Dendritic cell treated with granulocyte-macrophage colony-stimulating factor and Interleukin-4, amounts not matched to agents 40 ng/mL and 50 ng/mL, for 4 days (primary cell): ENCODE measurements at regions of chr2 and their contacts with region 1.

Region 1: DNA sequence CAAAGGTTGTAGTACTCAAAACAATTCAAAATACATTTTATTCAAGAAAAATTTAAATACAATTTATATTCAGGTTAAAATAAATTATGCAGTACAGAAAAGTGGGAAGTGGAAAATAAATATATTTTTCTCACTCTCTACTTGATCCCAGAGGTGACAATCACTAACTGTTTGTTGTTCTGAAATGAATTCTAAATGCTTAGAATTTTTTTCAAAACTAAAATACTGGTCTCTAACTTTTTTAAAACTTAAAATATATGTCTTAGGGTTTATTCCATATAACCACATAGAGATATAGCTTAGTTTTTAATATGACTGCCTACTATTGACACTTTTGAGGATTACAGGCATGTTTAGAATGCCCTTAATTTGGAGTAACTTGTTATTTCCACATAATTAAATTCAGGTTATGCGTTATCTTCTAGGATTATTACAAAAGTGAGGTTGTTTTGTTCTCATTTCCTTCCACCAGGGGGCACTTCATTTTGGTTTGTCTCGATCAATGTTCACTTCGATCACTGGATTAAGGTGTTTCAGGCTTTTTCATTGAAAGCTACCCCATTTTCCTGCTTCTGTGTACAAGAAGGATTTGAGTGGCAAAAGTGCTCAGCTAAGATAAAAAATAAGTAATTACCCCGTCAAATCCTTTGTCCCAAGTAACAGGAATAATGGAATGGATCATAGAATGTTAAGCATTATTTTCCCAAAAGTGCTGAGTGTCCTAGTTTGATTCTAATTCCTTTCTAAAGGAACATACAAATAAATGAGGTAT is 27.1 kb upstream of the TFPI start:
- H3K4me3 Mint-ChIP-seq: no peak overlapping the region
- H3K27ac Mint-ChIP-seq: no peak overlapping the region
- H3K4me1 Mint-ChIP-seq: peaks cover 6% of the 10 kb centered on the region
- H3K27me3 Mint-ChIP-seq: no peaks in the 10 kb centered on the region

Region 2: DNA sequence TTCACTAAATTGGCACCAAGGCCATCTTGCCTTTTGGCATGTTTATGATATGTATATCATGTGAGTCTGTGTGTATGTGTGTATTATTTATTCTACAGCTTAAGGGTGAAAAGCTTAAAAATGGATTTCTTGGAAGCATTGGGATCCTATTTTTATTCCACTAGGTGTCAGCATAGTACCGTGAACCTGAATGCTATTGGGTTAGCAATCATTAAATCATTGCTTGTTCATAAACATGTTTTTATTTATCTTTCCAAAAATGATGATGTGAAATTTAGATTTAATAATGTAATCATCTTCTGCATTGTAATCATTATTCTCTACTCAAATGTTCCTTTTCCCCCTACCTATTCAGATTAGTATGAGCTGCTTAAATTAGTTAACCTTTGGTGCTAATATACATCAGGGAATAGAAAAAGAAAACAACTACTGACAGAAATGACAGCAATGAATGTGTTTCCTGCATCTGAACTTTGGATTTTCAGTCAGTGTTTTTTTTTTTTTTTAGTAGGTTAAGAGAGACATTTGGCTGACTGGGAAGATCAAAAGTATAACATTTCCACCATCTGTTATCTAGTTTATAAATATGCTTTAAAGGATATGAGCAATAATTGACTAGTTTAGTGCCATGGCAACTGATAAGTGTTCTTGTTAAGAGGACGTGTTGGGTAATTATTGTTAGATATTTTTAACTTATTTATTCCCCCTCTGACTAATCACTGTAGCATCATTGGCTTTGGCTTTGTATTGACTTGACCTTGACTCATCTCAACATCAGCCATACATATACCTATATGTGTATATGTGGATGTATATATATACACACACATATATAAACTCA is 718.2 kb before region 1 on chr2:
- intact Hi-C with region 1: loop called (anchors 10 kb)
- H3K4me3 Mint-ChIP-seq: no peak overlapping the region
- H3K27ac Mint-ChIP-seq: no peak overlapping the region
- H3K4me1 Mint-ChIP-seq: no peaks in the 10 kb centered on the region
- H3K27me3 Mint-ChIP-seq: no peaks in the 10 kb centered on the region

Region 3: DNA sequence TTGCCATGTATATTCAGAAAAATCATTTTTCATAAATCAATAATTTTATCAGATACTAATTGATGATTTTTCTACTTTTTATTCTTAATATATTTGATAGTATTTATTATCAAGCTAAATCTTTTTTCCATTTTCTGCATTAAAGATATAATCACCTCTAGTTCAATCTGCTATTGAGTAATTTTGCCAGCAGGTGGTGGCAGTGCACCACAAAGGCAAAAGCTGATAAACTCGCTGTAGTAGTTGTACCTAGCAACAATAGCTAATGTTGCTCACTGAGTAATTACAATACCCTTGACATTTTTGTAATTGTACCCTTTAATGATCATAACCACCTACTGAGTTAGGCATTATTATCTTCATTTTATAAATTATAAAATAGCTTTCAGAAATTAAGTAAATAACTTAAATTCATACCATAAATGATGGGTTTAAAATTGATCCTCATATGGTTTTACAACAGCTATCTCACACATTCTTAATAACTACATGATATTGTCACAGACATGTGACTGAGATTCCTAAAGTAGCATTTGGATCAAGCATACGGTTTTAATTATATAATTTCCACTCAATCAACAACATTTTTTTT is 81.3 kb before region 1 on chr2:
- intact Hi-C with region 1: loop called (anchors 1 kb)
- H3K4me3 Mint-ChIP-seq: no peak overlapping the region
- H3K27ac Mint-ChIP-seq: no peak overlapping the region
- H3K4me1 Mint-ChIP-seq: peaks cover 11% of the 10 kb centered on the region
- H3K27me3 Mint-ChIP-seq: no peaks in the 10 kb centered on the region

Region 4: GRCh38 chr2:187842978-187843847 is 261.9 kb after region 1 on chr2:
- intact Hi-C with region 1: loop called (anchors 5 kb)
- H3K4me3 Mint-ChIP-seq: no peak overlapping the region
- H3K27ac Mint-ChIP-seq: no peak overlapping the region
- H3K4me1 Mint-ChIP-seq: no peaks in the 10 kb centered on the region
- H3K27me3 Mint-ChIP-seq: no peaks in the 10 kb centered on the region

Region 5: GRCh38 chr2:188512456-188512855 is 931.1 kb after region 1 on chr2:
- intact Hi-C with region 1: loop called (anchors 5 kb)
- H3K4me3 Mint-ChIP-seq: no peak overlapping the region
- H3K27ac Mint-ChIP-seq: no peak overlapping the region
- H3K4me1 Mint-ChIP-seq: no peaks in the 10 kb centered on the region
- H3K27me3 Mint-ChIP-seq: no peaks in the 10 kb centered on the region

Region 6: DNA sequence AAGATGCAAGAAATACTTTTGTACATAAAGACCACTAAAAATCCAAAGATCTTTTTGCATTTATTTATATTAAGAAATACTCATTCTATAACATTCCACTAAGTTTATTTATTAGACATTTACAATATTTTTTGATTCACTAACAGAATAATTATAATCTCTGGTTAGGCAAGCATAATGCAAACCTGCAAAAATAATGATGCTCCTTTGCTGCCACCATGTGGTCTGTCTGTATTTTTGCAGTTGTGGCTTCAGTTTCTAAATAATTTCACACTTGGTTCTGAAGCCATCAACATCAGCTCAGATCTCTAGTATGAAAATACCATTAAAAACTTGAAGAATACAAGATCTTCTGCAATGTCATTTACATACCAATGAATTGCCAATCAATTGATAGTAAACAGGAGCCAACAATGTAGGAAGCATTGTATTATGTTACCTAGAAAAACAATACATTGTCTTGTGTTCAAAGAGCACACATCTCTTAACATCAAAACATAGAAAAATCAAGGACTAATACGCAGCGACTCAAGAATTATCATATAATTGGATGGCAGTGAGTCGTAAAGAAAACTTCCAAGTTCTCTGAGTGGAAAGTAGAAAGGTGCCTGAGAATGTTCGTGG is 1831.1 kb after region 1 on chr2:
- intact Hi-C with region 1: loop called (anchors 5 kb)
- H3K4me3 Mint-ChIP-seq: no peak overlapping the region
- H3K27ac Mint-ChIP-seq: no peak overlapping the region
- H3K4me1 Mint-ChIP-seq: no peaks in the 10 kb centered on the region
- H3K27me3 Mint-ChIP-seq: no peaks in the 10 kb centered on the region